Esophagus squamous epithelium (tissue), 5 donors: ENCODE measurements at regions of chr3 and their contacts with region 1.

Region 1: DNA sequence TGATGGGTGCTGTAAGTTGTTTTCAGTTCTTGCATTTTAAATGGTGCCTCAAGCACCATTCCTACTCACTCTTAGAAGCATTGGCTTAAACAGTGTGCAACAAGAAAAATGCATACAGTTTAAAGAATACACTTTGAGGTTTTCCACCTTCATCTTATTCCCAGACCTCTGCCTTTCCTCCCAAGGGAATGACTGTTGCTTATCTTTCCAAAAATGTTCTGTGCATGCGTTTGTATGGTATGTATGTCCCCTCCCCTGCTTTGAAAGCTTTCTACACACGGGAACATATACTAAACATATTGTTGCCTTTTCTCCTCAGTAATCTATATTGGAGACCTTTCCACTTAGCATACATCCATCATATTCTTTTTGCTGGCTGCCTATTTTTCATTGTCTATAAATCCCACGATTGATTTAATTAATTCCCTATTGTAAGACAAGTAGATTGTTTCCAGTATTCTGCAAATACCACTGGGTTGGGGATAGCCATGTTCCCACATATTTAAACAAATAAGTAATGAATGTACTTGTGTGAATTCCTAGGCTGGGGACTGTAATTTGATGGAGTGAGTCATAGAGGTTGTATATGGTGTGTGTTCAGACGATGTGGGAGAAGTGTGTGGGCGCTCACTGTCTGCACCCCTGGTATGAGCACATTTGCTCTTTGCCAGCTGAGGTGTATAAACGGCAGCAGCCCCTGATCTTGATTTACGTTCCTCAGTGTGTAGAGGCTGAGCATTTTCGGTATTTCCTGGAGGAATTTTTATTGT is 5.8 kb downstream of the TRAK1 start:
- DNase-seq: no peak
- H3K4me3 ChIP-seq: no peak overlapping the region
- H3K27ac ChIP-seq: peak overlapping the region in 3 of 4 donors; percentile 3 to 44 (median 19)
- H3K4me1 ChIP-seq: peaks cover 14 to 94% (median 60%) of the 10 kb centered on the region in 3 donors
- H3K27me3 ChIP-seq: no peaks in the 10 kb centered on the region
- CTCF ChIP-seq: no peak
- POLR2A ChIP-seq: no peak

Region 2: DNA sequence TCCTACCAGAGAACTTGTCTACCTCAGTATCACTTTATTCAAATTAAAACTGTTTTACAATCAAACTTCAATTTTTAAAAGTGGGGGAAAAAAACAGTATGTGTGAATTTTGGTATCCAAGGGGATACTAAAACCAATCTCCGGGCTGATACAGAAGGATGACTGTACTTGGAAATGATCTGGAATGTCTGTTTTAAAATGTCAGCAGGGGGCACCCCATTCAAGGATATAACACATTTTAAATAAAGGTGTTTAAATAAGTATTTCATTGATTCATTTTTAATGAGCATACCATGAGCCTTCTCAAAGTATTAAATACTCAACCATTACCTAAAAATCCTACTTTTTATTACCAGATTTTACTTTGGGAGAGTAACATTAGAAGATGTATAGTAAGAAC is 203.0 kb before region 1 on chr3:
- intact Hi-C with region 1: loop called (anchors 5 kb)
- DNase-seq: no peak
- H3K4me3 ChIP-seq: no peak overlapping the region
- H3K27ac ChIP-seq: no peak overlapping the region
- H3K4me1 ChIP-seq: no peaks in the 10 kb centered on the region
- H3K27me3 ChIP-seq: no peaks in the 10 kb centered on the region
- CTCF ChIP-seq: peak in 5 of 6 experiments; percentile 34 to 72 (median 39)
- POLR2A ChIP-seq: no peak

Region 3: DNA sequence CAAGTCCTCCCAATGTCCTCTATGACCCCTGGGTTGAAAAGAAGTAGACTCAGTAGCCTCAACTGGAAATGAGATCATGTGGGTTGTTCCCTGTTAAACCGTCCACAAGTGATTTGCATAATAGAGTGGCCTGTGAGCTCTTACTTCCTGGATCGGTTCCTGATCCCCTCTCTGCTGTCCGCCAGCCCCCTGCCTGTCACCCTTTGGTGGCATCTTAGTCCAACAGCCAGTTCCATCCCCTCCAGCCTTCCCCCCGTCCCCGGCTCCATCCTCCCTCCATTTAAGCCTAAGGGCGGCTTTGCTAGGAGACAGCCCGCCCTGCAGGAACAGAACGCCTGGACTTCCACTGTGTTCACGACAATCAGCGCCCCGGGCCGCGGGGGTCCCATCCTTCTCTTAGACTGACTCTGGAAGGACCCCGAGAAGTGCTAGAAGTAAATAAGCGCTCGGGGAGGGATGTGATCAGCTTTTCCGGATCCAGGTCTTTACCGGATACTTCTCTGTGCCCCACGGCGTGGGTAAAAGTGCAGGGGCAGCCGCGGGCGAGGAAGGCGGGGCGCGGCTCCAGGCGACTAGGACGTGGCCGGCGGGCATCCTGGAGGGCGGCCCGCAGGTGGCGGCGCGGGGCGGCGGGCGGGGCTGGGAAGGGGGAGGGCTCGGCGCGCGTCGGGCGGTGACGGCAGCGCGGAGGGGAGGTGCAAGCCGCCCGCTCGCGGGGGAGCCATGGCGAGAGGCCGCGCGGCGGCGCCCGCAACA is 83.9 kb before region 1 on chr3:
- intact Hi-C with region 1: loop called (anchors 5 kb)
- DNase-seq: peak; percentile 34
- H3K4me3 ChIP-seq: peak overlapping the region; percentile 86 to 96 (median 90)
- H3K27ac ChIP-seq: peak overlapping the region; percentile 88 to 97 (median 92)
- H3K4me1 ChIP-seq: peaks cover 12 to 49% (median 15%) of the 10 kb centered on the region in 3 donors
- H3K27me3 ChIP-seq: no peaks in the 10 kb centered on the region
- CTCF ChIP-seq: peak in 1 of 6 experiments; percentile 6
- POLR2A ChIP-seq: peak in 1 of 4 donors; percentile 30

Region 4: GRCh38 chr3:42025370-42026138 is 71.4 kb before region 1 on chr3:
- intact Hi-C with region 1: no loop called
- DNase-seq: peak; percentile 38
- H3K4me3 ChIP-seq: peak overlapping the region in 1 of 4 donors; percentile 17
- H3K27ac ChIP-seq: peak overlapping the region; percentile 62 to 87 (median 86)
- H3K4me1 ChIP-seq: peaks cover 38 to 64% (median 49%) of the 10 kb centered on the region in 3 donors
- H3K27me3 ChIP-seq: no peaks in the 10 kb centered on the region
- CTCF ChIP-seq: no peak
- POLR2A ChIP-seq: no peak

Region 5: GRCh38 chr3:42134877-42135464 is 38.0 kb after region 1 on chr3:
- intact Hi-C with region 1: no loop called
- DNase-seq: no peak
- H3K4me3 ChIP-seq: no peak overlapping the region
- H3K27ac ChIP-seq: peak overlapping the region in 3 of 4 donors; percentile 19 to 62 (median 43)
- H3K4me1 ChIP-seq: peaks cover 3 to 33% (median 6%) of the 10 kb centered on the region in 3 donors
- H3K27me3 ChIP-seq: no peaks in the 10 kb centered on the region
- CTCF ChIP-seq: no peak
- POLR2A ChIP-seq: no peak